Heart left ventricle (tissue), 16 donors: ENCODE measurements at regions of chr21 and their contacts with region 1.

Region 1: GRCh38 chr21:17925000-17925610 is 105.9 kb upstream of the C21orf91 start:
- DNase-seq: peak in 2 of 5 donors; percentile 41 to 42
- ATAC-seq: peak; percentile 59 to 88 (median 82)
- H3K4me3 ChIP-seq: no peak overlapping the region
- H3K27ac ChIP-seq: no peak overlapping the region
- H3K4me1 ChIP-seq: peaks cover 0 to 10% (median 0%) of the 10 kb centered on the region in 12 donors
- H3K27me3 ChIP-seq: no peaks in the 10 kb centered on the region
- CTCF ChIP-seq: peak; percentile 73 to 90 (median 82)
- POLR2A ChIP-seq: no peak

Region 2: GRCh38 chr21:17679002-17679600 is 246.0 kb before region 1 on chr21:
- intact Hi-C with region 1: loop called in 7 of 10 experiments (anchors 2 to 5 kb)
- DNase-seq: peak in 1 of 5 donors; percentile 17
- ATAC-seq: peak; percentile 55 to 84 (median 77)
- H3K4me3 ChIP-seq: no peak overlapping the region
- H3K27ac ChIP-seq: no peak overlapping the region
- H3K4me1 ChIP-seq: no peaks in the 10 kb centered on the region
- H3K27me3 ChIP-seq: no peaks in the 10 kb centered on the region
- CTCF ChIP-seq: peak; percentile 73 to 91 (median 83)
- POLR2A ChIP-seq: no peak

Region 3: DNA sequence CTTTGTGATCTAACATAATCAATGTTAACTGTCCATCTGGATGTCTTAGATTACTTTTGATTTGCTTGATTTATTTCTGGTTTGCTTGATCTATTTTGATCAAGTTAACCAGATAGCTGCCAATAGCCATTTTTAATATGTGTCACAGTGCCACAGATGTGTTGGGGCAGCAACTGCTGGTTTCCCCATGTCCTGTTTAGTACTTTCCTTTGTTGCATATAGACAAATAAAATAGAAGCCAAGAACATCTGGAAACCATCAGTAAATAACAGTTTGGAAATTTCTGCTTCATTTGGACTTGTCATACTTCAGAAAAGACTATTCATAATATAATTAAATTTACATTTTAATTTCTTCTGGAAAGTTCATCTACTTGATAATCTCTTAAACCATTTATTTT is 39.6 kb after region 1 on chr21:
- intact Hi-C with region 1: loop called in 1 of 10 experiments (anchors 5 kb)
- DNase-seq: no peak
- ATAC-seq: no peak
- H3K4me3 ChIP-seq: no peak overlapping the region
- H3K27ac ChIP-seq: no peak overlapping the region
- H3K4me1 ChIP-seq: no peaks in the 10 kb centered on the region
- H3K27me3 ChIP-seq: no peaks in the 10 kb centered on the region
- CTCF ChIP-seq: no peak
- POLR2A ChIP-seq: no peak